ENCODE measurements at regions of chr15 and their contacts with region 1.

Region 1: GRCh38 chr15:77543159-77543882 is 89.4 kb downstream of the LINGO1 start:
- DNase-seq: peak; percentile 78
- ATAC-seq: peak; percentile 89
- H3K4me3 Mint-ChIP-seq: peak overlapping the region; percentile 83
- H3K27ac Mint-ChIP-seq: peak overlapping the region; percentile 24
- H3K4me1 Mint-ChIP-seq: peaks cover 43% of the 10 kb centered on the region
- H3K27me3 Mint-ChIP-seq: peaks cover 3% of the 10 kb centered on the region
- CTCF ChIP-seq: peak; percentile 51

Region 2: GRCh38 chr15:76905013-76905839 is 638.1 kb before region 1 on chr15 and contains the start of gene SCAPER:
- CTCF ChIA-PET with region 1: interaction called, 4 read pairs
- POLR2A ChIA-PET with region 1: no interaction called
- intact Hi-C with region 1: loop called (anchors 10 kb)
- DNase-seq: peak; percentile 92
- ATAC-seq: peak; percentile 86
- H3K4me3 Mint-ChIP-seq: peak within 1 kb of the TSS; percentile 94
- H3K27ac Mint-ChIP-seq: peak within 1 kb of the TSS; percentile 87
- H3K4me1 Mint-ChIP-seq: peaks cover 48% of the 10 kb centered on the region
- H3K27me3 Mint-ChIP-seq: no peaks in the 10 kb centered on the region
- CTCF ChIP-seq: no peak
- total RNA-seq, gene SCAPER: 28.9 and 38.8 TPM in 2 replicates

Region 3: DNA sequence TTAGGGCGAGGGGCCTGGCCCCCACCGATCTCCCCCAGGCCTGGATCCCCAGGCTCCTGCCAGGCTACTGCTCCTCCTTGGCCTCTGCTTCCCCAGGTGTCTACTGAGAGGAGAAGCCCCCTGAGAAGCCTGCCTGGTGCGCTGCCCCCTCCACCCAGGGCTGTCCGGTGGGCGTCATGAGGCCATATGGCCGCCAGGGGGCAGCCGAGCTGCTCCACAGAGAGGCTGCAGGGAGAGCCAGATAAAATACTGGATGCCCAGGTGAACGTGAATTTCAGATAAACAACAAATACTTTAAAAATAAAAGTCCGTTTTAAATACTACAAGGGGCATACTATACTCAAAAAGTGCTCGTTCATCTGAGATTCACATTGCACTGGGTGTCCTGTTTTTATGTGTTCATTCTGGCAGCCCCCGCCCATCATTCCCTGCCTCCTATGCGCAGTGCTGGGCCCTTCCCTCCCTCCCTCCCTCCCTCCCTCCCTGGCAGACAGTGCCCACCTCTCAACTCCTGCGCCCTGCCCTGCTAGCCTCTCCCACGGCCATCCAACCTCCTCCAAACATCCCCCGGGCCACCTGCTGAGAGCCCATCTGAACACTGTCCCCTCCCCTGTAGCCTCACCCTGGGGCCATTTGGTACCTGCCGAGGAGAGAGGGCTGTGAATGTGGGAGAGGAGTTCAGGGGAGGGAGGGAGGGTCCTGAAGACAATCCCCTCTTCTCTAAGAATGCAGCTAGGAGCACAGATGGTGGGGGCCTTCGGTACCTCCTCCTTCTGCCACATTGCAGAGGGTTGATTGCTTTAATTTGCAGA is 518.8 kb before region 1 on chr15:
- CTCF ChIA-PET with region 1: interaction called, 13 read pairs
- POLR2A ChIA-PET with region 1: no interaction called
- intact Hi-C with region 1: loop called (anchors 1 kb)
- DNase-seq: peak; percentile 69
- ATAC-seq: peak; percentile 78
- H3K4me3 Mint-ChIP-seq: no peak overlapping the region
- H3K27ac Mint-ChIP-seq: no peak overlapping the region
- H3K4me1 Mint-ChIP-seq: peaks cover 25% of the 10 kb centered on the region
- H3K27me3 Mint-ChIP-seq: no peaks in the 10 kb centered on the region
- CTCF ChIP-seq: peak; percentile 97

Region 4: GRCh38 chr15:77112838-77113504 is 430.4 kb before region 1 on chr15:
- CTCF ChIA-PET with region 1: interaction called, 146 read pairs
- POLR2A ChIA-PET with region 1: no interaction called
- intact Hi-C with region 1: no loop called
- DNase-seq: no peak
- ATAC-seq: no peak
- H3K4me3 Mint-ChIP-seq: no peak overlapping the region
- H3K27ac Mint-ChIP-seq: no peak overlapping the region
- H3K4me1 Mint-ChIP-seq: no peaks in the 10 kb centered on the region
- H3K27me3 Mint-ChIP-seq: no peaks in the 10 kb centered on the region
- CTCF ChIP-seq: no peak

Region 5: GRCh38 chr15:77186594-77187011 is 356.7 kb before region 1 on chr15:
- CTCF ChIA-PET with region 1: interaction called, 147 read pairs
- POLR2A ChIA-PET with region 1: interaction called, 16 read pairs
- intact Hi-C with region 1: loop called (anchors 1 kb)
- DNase-seq: no peak
- ATAC-seq: no peak
- H3K4me3 Mint-ChIP-seq: no peak overlapping the region
- H3K27ac Mint-ChIP-seq: peak overlapping the region; percentile 87
- H3K4me1 Mint-ChIP-seq: peaks cover 81% of the 10 kb centered on the region
- H3K27me3 Mint-ChIP-seq: no peaks in the 10 kb centered on the region
- CTCF ChIP-seq: no peak

Region 6: GRCh38 chr15:77507911-77508310 is 35.4 kb before region 1 on chr15:
- CTCF ChIA-PET with region 1: interaction called, 11 read pairs
- POLR2A ChIA-PET with region 1: no interaction called
- intact Hi-C with region 1: no loop called
- DNase-seq: no peak
- ATAC-seq: no peak
- H3K4me3 Mint-ChIP-seq: no peak overlapping the region
- H3K27ac Mint-ChIP-seq: no peak overlapping the region
- H3K4me1 Mint-ChIP-seq: peaks cover 28% of the 10 kb centered on the region
- H3K27me3 Mint-ChIP-seq: no peaks in the 10 kb centered on the region
- CTCF ChIP-seq: no peak

Measured in activated B cell treated with CpG ODN at 0.5 μM for 24 hours (primary cell).